H1 (cell line): ENCODE measurements at regions of chr6 and their contacts with region 1.

Region 1: GRCh38 chr6:108541838-108542759 is 18.6 kb upstream of the FOXO3 start:
- DNase-seq: peak; percentile 59 to 72
- H3K4me3 ChIP-seq: peak overlapping the region in 1 of 4 experiments; percentile 26; a peak in 1 of 8 replicates
- H3K27ac ChIP-seq: no peak overlapping the region
- H3K4me1 ChIP-seq: peaks cover 0 to 9% (median 1%) of the 10 kb centered on the region in 4 experiments; a peak in 3 of 7 replicates
- H3K27me3 ChIP-seq: no peaks in the 10 kb centered on the region
- CTCF ChIP-seq: peak; percentile 45 to 91 (median 90)
- EP300 ChIP-seq: no peak
- POLR2A ChIP-seq: no peak
- RAD21 ChIP-seq: peak; percentile 99

Region 2: DNA sequence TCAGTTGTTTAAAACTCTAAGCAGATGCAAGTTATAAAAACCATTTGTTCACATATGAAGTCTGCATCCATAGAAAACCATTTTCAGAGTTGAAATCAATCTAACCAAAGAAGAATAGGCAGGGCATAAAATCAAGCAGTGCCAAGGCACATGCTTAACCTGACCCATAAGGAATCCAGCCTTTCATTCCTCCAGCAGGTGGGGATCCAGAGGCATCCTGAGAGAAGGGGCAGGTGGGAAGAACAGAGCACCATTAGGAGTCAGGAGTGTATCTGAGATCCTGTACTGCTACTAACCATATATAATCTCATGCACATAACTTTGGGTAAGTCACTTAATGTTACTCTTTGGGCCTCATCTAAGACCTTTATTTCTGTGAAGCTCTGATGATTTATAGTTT is 10.8 kb before region 1 on chr6:
- CTCF ChIA-PET with region 1: interaction called, 18 read pairs
- POLR2A ChIA-PET with region 1: no interaction called
- DNase-seq: no peak
- H3K4me3 ChIP-seq: no peak overlapping the region
- H3K27ac ChIP-seq: no peak overlapping the region
- H3K4me1 ChIP-seq: no peaks in the 10 kb centered on the region
- H3K27me3 ChIP-seq: no peaks in the 10 kb centered on the region
- CTCF ChIP-seq: peak; percentile 29 to 64 (median 60)
- EP300 ChIP-seq: no peak
- POLR2A ChIP-seq: no peak
- RAD21 ChIP-seq: peak; percentile 57 to 75

Region 3: GRCh38 chr6:108627692-108628550 is 85.8 kb after region 1 on chr6:
- CTCF ChIA-PET with region 1: interaction called, 10 read pairs
- POLR2A ChIA-PET with region 1: no interaction called
- DNase-seq: no peak
- H3K4me3 ChIP-seq: no peak overlapping the region
- H3K27ac ChIP-seq: no peak overlapping the region
- H3K4me1 ChIP-seq: peaks cover 0 to 8% (median 5%) of the 10 kb centered on the region in 4 experiments; a peak in 4 of 7 replicates
- H3K27me3 ChIP-seq: no peaks in the 10 kb centered on the region
- CTCF ChIP-seq: no peak
- EP300 ChIP-seq: no peak
- POLR2A ChIP-seq: no peak
- RAD21 ChIP-seq: no peak

Region 4: DNA sequence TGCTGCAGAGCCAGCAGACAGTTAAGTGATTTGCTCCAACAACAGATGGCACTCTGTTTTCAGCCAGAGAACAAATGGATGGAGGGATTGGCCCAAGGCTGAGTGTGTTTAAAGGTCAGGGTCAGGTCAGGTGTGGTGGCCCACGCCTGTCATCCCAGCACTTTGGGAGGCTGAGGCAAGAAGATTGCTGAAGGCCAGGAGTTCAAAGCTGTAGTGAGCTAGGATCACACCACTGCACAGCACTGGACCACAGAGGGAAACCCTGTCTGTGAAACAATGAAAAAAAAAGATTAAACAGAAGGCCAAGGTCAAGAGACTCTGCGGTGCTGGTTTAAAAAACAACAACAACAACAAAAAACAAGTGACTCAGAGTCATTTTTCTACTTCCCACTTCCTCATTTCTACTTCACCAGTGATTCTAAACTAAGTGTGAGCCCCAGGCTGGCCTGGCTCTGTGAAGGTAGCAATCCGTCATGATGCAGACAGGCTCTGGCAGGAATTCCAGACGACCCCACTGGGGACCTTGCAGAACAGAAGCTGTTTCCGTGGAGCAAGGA is 263.6 kb after region 1 on chr6:
- CTCF ChIA-PET with region 1: interaction called, 10 read pairs
- POLR2A ChIA-PET with region 1: no interaction called
- DNase-seq: no peak
- H3K4me3 ChIP-seq: no peak overlapping the region
- H3K27ac ChIP-seq: no peak overlapping the region
- H3K4me1 ChIP-seq: peaks cover 0 to 3% (median 0%) of the 10 kb centered on the region in 4 experiments; a peak in 1 of 7 replicates
- H3K27me3 ChIP-seq: no peaks in the 10 kb centered on the region
- CTCF ChIP-seq: no peak
- EP300 ChIP-seq: no peak
- POLR2A ChIP-seq: no peak
- RAD21 ChIP-seq: no peak

Region 5: GRCh38 chr6:108848116-108848868 is 306.2 kb after region 1 on chr6 and contains the start of gene ARMC2:
- CTCF ChIA-PET with region 1: interaction called, 21 read pairs
- POLR2A ChIA-PET with region 1: no interaction called
- DNase-seq: peak; percentile 73 to 98
- H3K4me3 ChIP-seq: peak within 1 kb of the TSS; percentile 76 to 88 (median 81)
- H3K27ac ChIP-seq: 0 out of 2 replicates have a peak within 1 kb of the TSS, but pooled peaks have one; percentile 6
- H3K4me1 ChIP-seq: peaks cover 0 to 8% (median 0%) of the 10 kb centered on the region in 4 experiments; a peak in 2 of 7 replicates
- H3K27me3 ChIP-seq: no peaks in the 10 kb centered on the region
- CTCF ChIP-seq: no peak
- EP300 ChIP-seq: no peak
- POLR2A ChIP-seq: no peak
- RAD21 ChIP-seq: no peak
- total RNA-seq, gene ARMC2: 4.3 and 4.4 TPM in 2 replicates

Region 6: GRCh38 chr6:108914235-108915022 is 372.3 kb after region 1 on chr6:
- CTCF ChIA-PET with region 1: interaction called, 10 read pairs
- POLR2A ChIA-PET with region 1: no interaction called
- DNase-seq: peak in 1 of 2 experiments; percentile 88
- H3K4me3 ChIP-seq: no peak overlapping the region
- H3K27ac ChIP-seq: no peak overlapping the region
- H3K4me1 ChIP-seq: no peaks in the 10 kb centered on the region; a peak in 1 of 7 replicates
- H3K27me3 ChIP-seq: no peaks in the 10 kb centered on the region; a peak in 1 of 7 replicates
- CTCF ChIP-seq: peak; percentile 95 to 99 (median 99)
- EP300 ChIP-seq: no peak
- POLR2A ChIP-seq: no peak
- RAD21 ChIP-seq: peak; percentile 78 to 85